ENCODE measurements at regions of chr6 and their contacts with region 1.

Region 1: DNA sequence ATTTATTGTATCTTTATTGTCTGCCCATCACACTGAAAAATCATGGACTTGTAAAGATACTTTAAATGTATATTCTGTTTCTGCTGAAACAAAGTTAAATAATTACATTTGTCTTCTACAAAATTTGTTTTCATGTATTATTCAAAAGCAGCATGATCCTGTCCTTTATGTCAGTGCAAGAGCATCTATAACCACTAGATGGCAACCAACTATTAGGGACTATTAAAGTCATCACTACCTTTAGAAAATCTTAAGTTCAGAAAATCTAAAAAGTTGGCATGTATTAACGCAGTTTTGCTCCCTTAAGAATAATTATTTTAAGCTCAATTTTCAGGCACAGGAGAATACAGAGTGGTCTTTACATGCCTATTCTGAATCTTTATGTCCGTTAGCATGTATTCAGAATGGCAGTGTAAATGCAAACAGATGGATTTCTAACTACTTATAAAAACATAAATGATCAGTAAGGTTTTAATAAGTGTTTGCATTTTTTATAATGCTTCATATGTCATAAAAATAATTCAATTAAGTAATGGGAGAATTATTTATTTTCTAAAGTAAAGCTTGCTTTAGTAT is 17.8 kb downstream of the TMEM30A start:
- DNase-seq: no peak

Region 2: DNA sequence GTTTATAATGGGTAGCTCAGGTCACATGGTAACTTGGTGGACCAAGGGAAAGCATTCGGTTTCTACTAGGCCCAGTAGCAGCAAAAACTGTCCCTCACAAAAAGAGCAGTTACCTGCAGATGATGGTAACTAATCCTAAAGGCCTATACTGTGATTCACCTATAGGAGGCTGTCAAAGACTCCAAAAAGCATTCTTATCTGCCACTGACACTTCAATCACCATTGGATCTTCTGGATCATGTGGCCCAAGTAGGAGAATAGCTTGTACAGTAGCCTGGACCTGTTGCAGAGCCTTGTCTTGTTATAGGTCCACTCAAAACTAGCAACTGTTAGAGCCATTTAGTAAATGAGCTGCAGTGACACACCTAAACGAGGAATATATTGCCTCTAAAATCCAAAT is 250.0 kb after region 1 on chr6:
- intact Hi-C with region 1: loop called in 1 of 2 experiments (anchors 10 kb)
- DNase-seq: no peak

Region 3: DNA sequence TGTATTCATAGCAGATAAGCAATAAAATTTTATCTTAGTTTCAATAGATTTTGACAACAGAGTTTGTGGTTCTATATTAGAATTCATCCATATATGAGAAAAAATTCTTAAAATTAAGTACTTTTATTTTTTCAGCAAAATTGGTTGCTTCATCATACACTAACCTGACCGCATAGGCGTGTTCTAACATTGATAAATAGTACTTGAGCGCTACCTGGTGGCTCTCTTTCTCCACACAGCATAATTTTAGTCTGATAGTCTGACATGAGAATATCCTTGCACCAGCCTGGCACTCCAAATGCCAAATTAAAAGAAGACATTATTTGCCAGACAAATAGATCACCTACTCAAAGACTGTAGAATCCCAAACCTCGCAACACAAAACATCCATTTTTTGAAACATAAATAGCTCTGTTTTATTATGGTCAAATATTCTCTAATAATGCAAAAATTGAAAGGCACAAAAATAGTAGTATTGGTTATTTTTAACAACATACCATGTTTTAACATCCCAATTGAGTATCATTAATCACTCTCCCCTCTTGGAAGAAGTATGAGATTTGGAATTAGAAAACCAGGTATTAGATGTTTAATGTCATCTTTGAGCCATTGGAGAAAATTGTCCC is 259.8 kb after region 1 on chr6:
- intact Hi-C with region 1: loop called in 1 of 2 experiments (anchors 5 kb)
- DNase-seq: no peak

Region 4: GRCh38 chr6:75588947-75589346 is 322.1 kb after region 1 on chr6:
- intact Hi-C with region 1: no loop called
- DNase-seq: no peak